Activated T-helper 2 cell treated with anti-CD3 and anti-CD28 coated beads, Interferon-gamma antibody, Interleukin-2, Interleukin-4, amounts not matched to agents 10 μg/mL and 5 μg/mL and 100 μg/mL, durations not matched to agents 14 hours and 24 hours and 36 hours (primary cell): ENCODE measurements at regions of chr19 and their contacts with region 1.

Region 1: GRCh38 chr19:51441410-51442390 is 16.6 kb downstream of the SIGLEC8 start:
- DNase-seq: peak; percentile 87
- H3K4me3 Mint-ChIP-seq: peak overlapping the region; percentile 88
- H3K27ac Mint-ChIP-seq: peak overlapping the region; percentile 91
- H3K4me1 Mint-ChIP-seq: peaks cover 68% of the 10 kb centered on the region
- H3K27me3 Mint-ChIP-seq: no peaks in the 10 kb centered on the region

Region 2: DNA sequence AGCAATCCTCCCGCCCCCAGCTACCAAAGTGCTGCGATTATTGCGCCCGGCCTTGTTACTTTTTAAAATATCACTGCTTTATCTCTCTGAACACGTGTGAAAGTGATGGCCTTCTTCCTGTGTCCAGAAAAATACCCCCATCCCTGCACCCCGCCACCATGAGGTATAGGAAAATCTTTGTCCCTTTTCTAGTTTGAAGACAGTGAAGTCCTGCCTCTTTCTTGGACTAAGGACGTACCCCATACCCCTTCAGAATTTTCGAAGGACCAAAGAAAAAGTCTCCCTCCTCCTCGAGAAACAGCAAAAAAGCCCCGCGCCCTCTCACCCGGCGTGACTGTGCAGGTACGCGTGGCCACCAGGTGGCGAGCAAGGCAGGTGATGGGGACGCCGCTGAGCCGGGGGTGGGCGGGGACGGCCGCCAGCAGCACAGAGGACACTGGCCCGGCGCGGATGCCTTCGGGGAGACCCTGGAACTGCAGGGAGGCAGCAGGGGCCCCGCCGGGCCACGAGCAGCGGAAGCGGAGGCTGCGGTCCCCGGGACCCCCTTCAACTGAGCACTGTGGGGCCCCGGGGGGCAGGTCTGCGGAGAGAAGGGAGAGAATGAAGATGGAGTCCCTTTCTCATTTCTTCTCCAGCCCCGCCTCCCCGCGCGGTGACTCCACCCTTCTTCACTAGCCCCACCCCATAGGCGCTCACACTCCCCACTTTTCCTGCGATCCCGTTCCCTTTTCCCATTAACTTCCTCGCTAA is 103.0 kb before region 1 on chr19:
- intact Hi-C with region 1: loop called (anchors 1 kb)
- DNase-seq: peak; percentile 83
- H3K4me3 Mint-ChIP-seq: peak overlapping the region; percentile 95
- H3K27ac Mint-ChIP-seq: peak overlapping the region; percentile 89
- H3K4me1 Mint-ChIP-seq: peaks cover 23% of the 10 kb centered on the region
- H3K27me3 Mint-ChIP-seq: peaks cover 2% of the 10 kb centered on the region

Region 3: GRCh38 chr19:51393959-51394836 is 47.5 kb before region 1 on chr19:
- intact Hi-C with region 1: loop called (anchors 1 kb)
- DNase-seq: peak; percentile 96
- H3K4me3 Mint-ChIP-seq: peak overlapping the region; percentile 93
- H3K27ac Mint-ChIP-seq: peak overlapping the region; percentile 98
- H3K4me1 Mint-ChIP-seq: peaks cover 51% of the 10 kb centered on the region
- H3K27me3 Mint-ChIP-seq: no peaks in the 10 kb centered on the region

Region 4: GRCh38 chr19:51467864-51468544 is 26.3 kb after region 1 on chr19:
- intact Hi-C with region 1: loop called (anchors 2 kb)
- DNase-seq: no peak
- H3K4me3 Mint-ChIP-seq: peak overlapping the region; percentile 55
- H3K27ac Mint-ChIP-seq: peak overlapping the region; percentile 15
- H3K4me1 Mint-ChIP-seq: peaks cover 67% of the 10 kb centered on the region
- H3K27me3 Mint-ChIP-seq: no peaks in the 10 kb centered on the region

Region 5: GRCh38 chr19:51514866-51515481 is 73.3 kb after region 1 on chr19:
- intact Hi-C with region 1: loop called (anchors 2 kb)
- DNase-seq: no peak
- H3K4me3 Mint-ChIP-seq: no peak overlapping the region
- H3K27ac Mint-ChIP-seq: no peak overlapping the region
- H3K4me1 Mint-ChIP-seq: peaks cover 22% of the 10 kb centered on the region
- H3K27me3 Mint-ChIP-seq: peaks cover under 1% of the 10 kb centered on the region

Region 6: DNA sequence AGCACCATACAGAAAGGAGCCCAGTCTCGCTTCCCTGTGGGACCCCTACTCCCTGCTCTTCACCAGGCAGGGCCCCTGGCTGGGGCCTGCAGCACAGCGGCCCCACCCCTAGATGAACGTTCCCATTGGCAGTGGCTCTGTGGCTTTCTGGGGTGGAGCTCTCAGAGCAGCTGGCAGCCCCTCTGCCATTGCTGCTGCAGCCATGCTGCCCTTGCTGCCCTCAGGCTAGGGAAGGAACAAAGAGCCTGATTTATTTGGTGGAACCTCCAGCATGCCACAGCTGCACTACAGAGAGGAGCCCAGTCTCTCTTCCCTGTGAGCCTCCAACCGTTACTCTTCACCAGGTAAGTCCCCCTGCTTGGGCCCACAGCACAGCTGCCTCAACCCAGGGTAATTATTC is 84.0 kb after region 1 on chr19:
- intact Hi-C with region 1: no loop called
- DNase-seq: no peak
- H3K4me3 Mint-ChIP-seq: no peak overlapping the region
- H3K27ac Mint-ChIP-seq: no peak overlapping the region
- H3K4me1 Mint-ChIP-seq: peaks cover 11% of the 10 kb centered on the region
- H3K27me3 Mint-ChIP-seq: peaks cover 37% of the 10 kb centered on the region